Caco-2 (cell line): ENCODE measurements at regions of chr2 and their contacts with region 1.

Region 1: GRCh38 chr2:85551698-85552678 is 9.3 kb downstream of the GGCX start:
- DNase-seq: peak; percentile 81 to 89
- H3K4me3 ChIP-seq: no peak overlapping the region
- H3K4me3 Mint-ChIP-seq: no peak overlapping the region
- H3K27ac Mint-ChIP-seq: no peak overlapping the region
- H3K4me1 ChIP-seq: no peaks in the 10 kb centered on the region
- H3K4me1 Mint-ChIP-seq: no peaks in the 10 kb centered on the region
- H3K27me3 ChIP-seq: no peaks in the 10 kb centered on the region
- H3K27me3 Mint-ChIP-seq: no peaks in the 10 kb centered on the region
- CTCF ChIP-seq: peak; percentile 93

Region 2: DNA sequence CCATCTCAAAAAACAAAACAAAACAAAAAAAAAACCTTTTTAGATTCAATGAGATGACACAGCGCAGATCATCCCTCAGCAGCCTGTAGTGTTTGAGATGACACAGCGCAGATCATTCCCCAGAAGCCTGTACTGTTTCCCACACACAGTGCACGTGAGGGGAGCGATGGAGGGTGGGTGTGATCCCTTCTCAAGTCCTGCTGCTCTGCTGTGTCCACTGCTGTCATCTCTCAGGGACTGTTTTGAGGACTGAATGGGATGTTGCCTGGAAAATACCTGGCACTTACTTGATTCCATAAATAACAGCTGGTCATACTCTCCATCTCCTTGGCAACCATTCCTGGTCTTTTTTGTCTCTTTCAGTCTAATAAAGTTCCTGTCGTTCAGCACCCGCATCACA is 249.9 kb before region 1 on chr2:
- CTCF ChIA-PET with region 1: interaction called, 7 read pairs
- POLR2A ChIA-PET with region 1: no interaction called
- intact Hi-C with region 1: loop called (anchors 1 kb)
- DNase-seq: no peak
- H3K4me3 ChIP-seq: no peak overlapping the region
- H3K4me3 Mint-ChIP-seq: no peak overlapping the region
- H3K27ac Mint-ChIP-seq: no peak overlapping the region
- H3K4me1 ChIP-seq: peaks cover 6% of the 10 kb centered on the region
- H3K4me1 Mint-ChIP-seq: peaks cover 9% of the 10 kb centered on the region
- H3K27me3 ChIP-seq: no peaks in the 10 kb centered on the region
- H3K27me3 Mint-ChIP-seq: no peaks in the 10 kb centered on the region
- CTCF ChIP-seq: no peak

Region 3: GRCh38 chr2:85843543-85843942 is 291.6 kb after region 1 on chr2:
- CTCF ChIA-PET with region 1: no interaction called
- POLR2A ChIA-PET with region 1: no interaction called
- intact Hi-C with region 1: no loop called
- DNase-seq: peak in 1 of 2 experiments; percentile 34
- H3K4me3 ChIP-seq: no peak overlapping the region
- H3K4me3 Mint-ChIP-seq: no peak overlapping the region
- H3K27ac Mint-ChIP-seq: no peak overlapping the region
- H3K4me1 ChIP-seq: no peaks in the 10 kb centered on the region
- H3K4me1 Mint-ChIP-seq: no peaks in the 10 kb centered on the region
- H3K27me3 ChIP-seq: no peaks in the 10 kb centered on the region
- H3K27me3 Mint-ChIP-seq: no peaks in the 10 kb centered on the region
- CTCF ChIP-seq: peak; percentile 35 to 55